GM23248 (cell line): ENCODE measurements at regions of chr14 and their contacts with region 1.

Region 1: GRCh38 chr14:68248481-68249255 is 429.1 kb downstream of the RAD51B start:
- DNase-seq: peak; percentile 69
- H3K4me3 ChIP-seq: no peak overlapping the region
- H3K27ac ChIP-seq: peak overlapping the region; percentile 67; the same call in 1 of the 2 replicates
- H3K4me1 ChIP-seq: peaks cover 41% of the 10 kb centered on the region
- H3K27me3 ChIP-seq: no peaks in the 10 kb centered on the region

Region 2: GRCh38 chr14:67837011-67837624 is 411.6 kb before region 1 on chr14:
- in situ Hi-C with region 1: no loop called
- DNase-seq: peak; percentile 82
- H3K4me3 ChIP-seq: no peak overlapping the region
- H3K27ac ChIP-seq: no peak overlapping the region
- H3K4me1 ChIP-seq: no peaks in the 10 kb centered on the region
- H3K27me3 ChIP-seq: no peaks in the 10 kb centered on the region

Region 3: GRCh38 chr14:67943947-67944346 is 304.7 kb before region 1 on chr14:
- in situ Hi-C with region 1: loop called (anchors 10 kb)
- DNase-seq: peak; percentile 88
- H3K4me3 ChIP-seq: no peak overlapping the region
- H3K27ac ChIP-seq: no peak overlapping the region
- H3K4me1 ChIP-seq: peaks cover 39% of the 10 kb centered on the region
- H3K27me3 ChIP-seq: no peaks in the 10 kb centered on the region

Region 4: GRCh38 chr14:68685419-68686204 is 436.9 kb after region 1 on chr14:
- in situ Hi-C with region 1: loop called (anchors 10 kb)
- DNase-seq: peak; percentile 76
- H3K4me3 ChIP-seq: no peak overlapping the region
- H3K27ac ChIP-seq: peak overlapping the region; percentile 83
- H3K4me1 ChIP-seq: peaks cover 87% of the 10 kb centered on the region
- H3K27me3 ChIP-seq: no peaks in the 10 kb centered on the region

Region 5: DNA sequence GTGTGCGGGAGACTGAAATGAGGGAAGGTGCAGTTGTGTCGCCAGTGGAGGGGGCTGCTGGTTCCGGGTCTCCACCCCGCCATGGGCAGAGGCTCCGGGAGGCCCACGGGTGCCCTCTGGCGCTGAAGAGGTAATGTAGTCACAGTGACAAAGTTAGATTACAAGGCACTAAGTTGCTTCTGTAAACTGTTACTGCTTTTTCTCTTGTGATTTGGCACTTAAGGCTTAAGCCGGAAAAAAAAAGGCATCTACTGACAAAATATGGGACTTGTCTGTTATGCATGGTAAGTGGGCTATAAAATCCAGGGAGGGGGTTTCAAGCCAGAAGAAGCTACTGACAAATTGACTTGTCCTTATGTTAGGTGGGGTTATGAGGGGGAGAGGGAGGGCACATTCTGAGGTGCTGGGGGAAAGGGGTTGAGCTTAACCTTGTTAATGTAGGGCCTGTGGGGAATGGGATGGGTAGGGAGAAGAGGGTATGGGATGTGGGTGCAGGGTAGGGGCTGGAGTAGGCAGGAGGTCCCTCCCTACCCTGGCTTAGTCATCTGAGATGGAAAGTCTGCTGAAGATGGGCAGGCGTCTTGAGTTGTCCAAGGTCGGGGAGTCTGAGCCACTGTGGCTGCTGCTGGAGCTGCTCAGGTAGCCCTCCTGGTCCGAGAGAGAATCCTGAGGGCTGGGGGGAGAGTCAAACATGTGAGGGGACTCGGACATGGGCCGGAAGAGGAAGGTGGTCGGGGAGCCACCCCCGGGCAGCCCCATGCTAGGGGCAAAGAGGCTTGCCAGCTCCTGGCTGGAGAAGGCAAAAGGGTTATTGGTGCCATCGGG is 540.5 kb after region 1 on chr14:
- in situ Hi-C with region 1: loop called (anchors 10 kb)
- DNase-seq: peak; percentile 88
- H3K4me3 ChIP-seq: peak overlapping the region; percentile 80
- H3K27ac ChIP-seq: peak overlapping the region; percentile 100
- H3K4me1 ChIP-seq: peaks cover 40% of the 10 kb centered on the region
- H3K27me3 ChIP-seq: no peaks in the 10 kb centered on the region

Region 6: DNA sequence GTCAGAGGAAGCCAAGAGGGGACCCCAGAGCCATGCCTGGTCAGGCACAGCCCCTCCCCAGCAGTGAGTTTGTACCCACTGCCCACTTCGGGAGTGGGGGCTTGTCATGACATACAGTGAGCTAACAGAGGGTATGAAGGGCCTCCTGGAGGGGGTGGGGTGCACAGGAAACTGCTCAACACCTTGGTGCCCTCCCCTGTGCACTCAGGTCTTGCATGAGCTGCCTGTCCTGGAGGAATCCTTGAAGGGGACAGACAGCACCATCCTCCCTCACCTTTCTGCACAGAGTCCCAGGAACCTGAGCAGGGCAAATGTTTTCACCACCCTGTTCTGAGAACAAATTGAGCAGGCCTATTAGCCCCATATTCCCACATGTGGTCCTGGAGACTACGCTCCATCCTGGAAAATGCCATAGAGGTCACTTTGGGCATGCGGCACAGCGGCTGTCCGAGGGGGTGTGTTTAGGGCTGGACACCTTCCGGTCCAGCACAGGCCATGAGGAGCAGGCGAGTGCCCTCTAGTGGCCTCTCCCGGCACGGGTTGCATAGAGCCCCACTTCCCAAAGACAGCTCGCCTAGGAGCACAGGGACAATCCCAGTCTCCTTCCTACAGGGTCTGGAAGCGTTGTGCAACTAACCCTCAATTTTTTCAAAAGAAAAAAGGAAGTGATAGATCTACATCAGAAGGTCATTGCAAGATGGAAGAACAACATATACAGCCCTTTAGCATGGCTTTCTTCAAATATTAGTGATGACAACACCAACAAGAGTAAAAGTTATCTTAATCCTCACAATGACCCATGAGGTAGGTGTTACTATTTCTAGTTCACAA is 576.1 kb after region 1 on chr14:
- in situ Hi-C with region 1: loop called (anchors 10 kb)
- DNase-seq: peak; percentile 83
- H3K4me3 ChIP-seq: no peak overlapping the region
- H3K27ac ChIP-seq: no peak overlapping the region
- H3K4me1 ChIP-seq: no peaks in the 10 kb centered on the region
- H3K27me3 ChIP-seq: no peaks in the 10 kb centered on the region